ENCODE measurements at regions of chr1 and their contacts with region 1.

Region 1: GRCh38 chr1:221753828-221754188 is 11.9 kb upstream of the DUSP10 start:
- DNase-seq: no peak
- ATAC-seq: no peak
- H3K4me3 ChIP-seq: peak overlapping the region in 1 of 5 experiments; percentile 43
- H3K4me3 Mint-ChIP-seq: peak overlapping the region; percentile 82
- H3K27ac ChIP-seq: no peak overlapping the region
- H3K27ac Mint-ChIP-seq: peak overlapping the region; percentile 85
- H3K4me1 ChIP-seq: peaks cover 15 to 22% of the 10 kb centered on the region in 2 donors
- H3K4me1 Mint-ChIP-seq: peaks cover 36% of the 10 kb centered on the region
- H3K27me3 ChIP-seq: no peaks in the 10 kb centered on the region
- H3K27me3 Mint-ChIP-seq: no peaks in the 10 kb centered on the region
- CTCF ChIP-seq: no peak

Region 2: DNA sequence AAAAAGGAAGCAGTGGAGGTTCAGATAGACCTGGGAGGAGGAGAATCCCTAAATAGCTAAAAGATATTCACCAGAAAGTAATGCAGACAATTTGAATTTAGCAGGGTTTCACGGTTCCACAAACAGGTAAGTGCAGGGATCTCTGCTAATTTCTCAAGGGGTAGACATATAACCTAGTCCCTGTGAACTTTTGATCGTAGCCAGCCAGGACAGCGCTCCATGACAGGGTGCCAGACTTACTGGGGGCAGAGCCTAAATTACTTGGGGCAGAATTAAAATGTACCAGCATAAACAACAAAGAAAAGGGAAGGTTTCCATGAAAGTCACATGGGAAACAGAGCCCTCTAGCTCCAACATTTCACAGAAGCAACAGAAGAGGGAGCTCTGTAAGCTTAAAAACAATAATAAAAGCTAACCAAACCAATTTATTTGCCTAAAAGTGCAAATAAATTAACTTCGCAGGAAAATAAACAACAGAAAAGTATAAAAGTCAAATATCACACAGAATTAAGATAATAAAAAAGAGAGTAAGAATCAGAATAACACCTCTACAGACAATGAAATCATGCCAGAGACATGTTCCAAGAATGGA is 210.2 kb before region 1 on chr1:
- CTCF ChIA-PET with region 1: no interaction called
- POLR2A ChIA-PET with region 1: no interaction called
- intact Hi-C with region 1: no loop called
- DNase-seq: no peak
- ATAC-seq: no peak
- H3K4me3 ChIP-seq: no peak overlapping the region
- H3K4me3 Mint-ChIP-seq: no peak overlapping the region
- H3K27ac ChIP-seq: no peak overlapping the region
- H3K27ac Mint-ChIP-seq: no peak overlapping the region
- H3K4me1 ChIP-seq: no peaks in the 10 kb centered on the region
- H3K4me1 Mint-ChIP-seq: no peaks in the 10 kb centered on the region
- H3K27me3 ChIP-seq: no peaks in the 10 kb centered on the region
- H3K27me3 Mint-ChIP-seq: peaks cover 15% of the 10 kb centered on the region
- CTCF ChIP-seq: peak; percentile 30

Region 3: DNA sequence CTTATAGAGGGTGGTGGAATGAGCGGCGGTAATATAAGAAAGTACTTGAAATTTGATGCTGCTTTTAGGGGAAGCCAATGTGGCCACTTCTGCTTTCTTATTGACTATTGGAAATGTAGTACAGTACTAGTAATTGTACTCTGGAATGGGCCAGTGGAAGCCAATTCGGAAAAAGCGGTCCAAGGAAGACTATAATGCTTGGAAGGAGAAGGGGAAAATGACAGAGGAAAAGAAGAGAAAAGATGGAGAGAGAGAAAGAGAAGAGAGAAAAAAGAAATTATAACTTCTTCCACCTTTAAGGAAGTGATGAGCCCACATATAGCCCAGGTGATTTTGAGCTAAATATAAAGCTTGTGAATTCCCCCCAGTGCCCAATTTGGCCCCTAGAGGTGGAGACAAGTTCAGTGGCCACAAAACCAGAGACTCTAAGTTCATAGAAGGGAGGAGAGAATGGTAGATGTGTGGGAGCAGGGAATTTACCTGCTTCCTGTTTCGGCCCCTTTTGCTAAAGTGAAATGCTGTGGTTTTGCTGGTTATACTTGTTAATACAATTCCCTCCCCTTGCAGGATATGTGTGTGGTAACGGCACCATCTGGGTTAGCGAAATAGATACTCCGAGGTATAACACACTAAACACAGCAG is 23.7 kb after region 1 on chr1:
- CTCF ChIA-PET with region 1: interaction called, 8 read pairs
- POLR2A ChIA-PET with region 1: no interaction called
- intact Hi-C with region 1: loop called (anchors 1 kb)
- DNase-seq: peak; percentile 91
- ATAC-seq: peak; percentile 62
- H3K4me3 ChIP-seq: peak overlapping the region in 4 of 5 experiments; percentile 3 to 49 (median 26)
- H3K4me3 Mint-ChIP-seq: peak overlapping the region; percentile 79
- H3K27ac ChIP-seq: peak overlapping the region; percentile 80 to 88
- H3K27ac Mint-ChIP-seq: peak overlapping the region; percentile 91
- H3K4me1 ChIP-seq: peaks cover 54 to 64% of the 10 kb centered on the region in 2 donors
- H3K4me1 Mint-ChIP-seq: peaks cover 65% of the 10 kb centered on the region
- H3K27me3 ChIP-seq: no peaks in the 10 kb centered on the region
- H3K27me3 Mint-ChIP-seq: no peaks in the 10 kb centered on the region
- CTCF ChIP-seq: no peak

Region 4: GRCh38 chr1:221878134-221878533 is 124.3 kb after region 1 on chr1:
- CTCF ChIA-PET with region 1: no interaction called
- POLR2A ChIA-PET with region 1: no interaction called
- intact Hi-C with region 1: no loop called
- DNase-seq: no peak
- ATAC-seq: no peak
- H3K4me3 ChIP-seq: no peak overlapping the region
- H3K4me3 Mint-ChIP-seq: no peak overlapping the region
- H3K27ac ChIP-seq: no peak overlapping the region
- H3K27ac Mint-ChIP-seq: peak overlapping the region; percentile 48
- H3K4me1 ChIP-seq: peaks cover 0 to 4% of the 10 kb centered on the region in 2 donors
- H3K4me1 Mint-ChIP-seq: peaks cover 25% of the 10 kb centered on the region
- H3K27me3 ChIP-seq: no peaks in the 10 kb centered on the region
- H3K27me3 Mint-ChIP-seq: no peaks in the 10 kb centered on the region
- CTCF ChIP-seq: no peak

Measured in B cell (primary cell).